ENCODE measurements at regions of chr1 and their contacts with region 1.

Region 1: DNA sequence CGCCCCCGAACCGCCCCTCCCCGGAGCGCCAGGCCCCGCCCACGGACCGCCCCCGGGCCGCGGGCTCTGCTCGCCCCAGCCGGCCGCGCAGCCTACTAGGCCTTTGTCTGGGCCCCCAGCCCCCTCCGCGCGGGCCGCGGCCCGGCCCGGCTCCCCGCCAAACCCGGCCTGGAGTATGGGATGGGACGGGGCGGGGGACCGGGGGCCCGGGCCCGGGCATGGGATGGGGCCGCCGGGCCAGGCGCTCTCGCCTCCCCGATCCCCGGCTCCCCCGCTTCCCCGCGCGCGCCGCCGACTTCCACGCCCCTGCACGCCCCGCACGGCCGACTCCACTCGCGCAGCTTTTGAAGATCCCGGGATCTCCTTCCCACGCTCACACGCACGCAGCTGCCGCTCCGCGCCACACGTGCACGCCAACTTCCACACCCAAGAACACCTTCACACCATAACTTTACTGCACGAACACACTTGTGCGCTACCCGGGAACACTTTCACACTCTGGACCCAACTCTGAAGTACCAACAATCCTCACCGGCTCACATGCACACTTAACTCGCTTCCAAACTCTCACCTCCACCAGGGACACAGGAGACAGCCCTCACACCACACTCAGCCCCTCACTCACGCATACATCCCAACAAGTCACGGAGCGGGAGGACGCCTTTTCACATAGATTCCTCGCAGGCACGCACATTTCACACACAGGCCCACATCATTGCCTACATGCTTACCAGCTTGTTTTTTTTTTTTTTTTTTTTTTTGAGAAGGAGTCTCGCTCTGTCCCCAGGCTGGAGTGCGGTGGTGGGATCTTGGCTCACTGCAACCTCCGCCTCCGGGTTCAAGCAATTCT is 487 bp upstream of the HSPG2 start:
- DNase-seq: peak; percentile 92

Region 2: GRCh38 chr1:21782868-21783678 is 154.5 kb before region 1 on chr1 and contains the start of gene USP48:
- intact Hi-C with region 1: loop called (anchors 5 kb)
- DNase-seq: peak; percentile 99
- total RNA-seq, gene USP48: 41.3 TPM

Region 3: GRCh38 chr1:21904704-21905520 is 32.7 kb before region 1 on chr1:
- intact Hi-C with region 1: loop called (anchors 2 kb)
- DNase-seq: no peak

Region 4: DNA sequence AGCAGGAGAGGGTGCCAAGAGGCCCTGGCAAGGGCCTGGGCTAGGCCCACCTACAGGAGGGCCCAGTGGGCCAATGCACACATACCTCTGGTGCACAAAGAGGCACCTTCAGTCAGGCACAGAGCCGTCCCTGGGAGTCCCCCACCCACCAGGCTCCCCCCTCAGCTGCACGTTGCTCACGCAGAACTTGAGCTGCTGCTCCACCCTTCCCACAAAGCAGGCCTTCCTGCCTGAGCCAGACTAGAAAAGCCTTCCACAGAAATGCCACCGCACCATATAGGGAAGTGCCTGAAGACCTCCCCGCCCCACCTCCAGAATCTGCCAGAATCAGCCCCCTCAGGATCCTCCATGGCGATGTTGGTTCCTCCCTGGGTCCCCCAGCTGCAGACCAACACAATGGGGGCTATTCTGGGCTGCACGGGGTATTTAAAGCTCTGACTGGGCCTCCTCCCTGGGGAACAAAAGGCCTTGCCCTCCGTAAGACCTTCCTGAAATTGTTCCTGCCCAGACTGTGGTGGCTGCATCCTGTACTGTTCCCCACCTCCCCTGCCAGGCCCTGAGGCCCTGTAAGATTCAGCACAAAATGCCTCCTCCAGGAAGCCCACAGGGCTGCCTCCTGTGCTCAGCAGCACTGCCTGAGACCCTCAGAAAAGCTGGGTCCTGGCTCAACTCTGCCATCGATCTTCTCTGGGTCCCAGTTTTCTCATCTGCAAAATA is 27.7 kb before region 1 on chr1:
- intact Hi-C with region 1: loop called (anchors 2 kb)
- DNase-seq: peak; percentile 89

Region 5: GRCh38 chr1:21922090-21923013 is 15.2 kb before region 1 on chr1:
- intact Hi-C with region 1: loop called (anchors 1 kb)
- DNase-seq: no peak

Measured in cardiac septum (tissue), 1 donor.